ENCODE measurements at regions of chr12 and their contacts with region 1.

Region 1: GRCh38 chr12:92145731-92146496 is at the start of gene BTG1:
- DNase-seq: peak; percentile 99
- ATAC-seq: peak; percentile 78
- H3K4me3 Mint-ChIP-seq: peak within 1 kb of the TSS; percentile 99
- H3K27ac Mint-ChIP-seq: peak within 1 kb of the TSS; percentile 99
- H3K4me1 Mint-ChIP-seq: peaks cover 22% of the 10 kb centered on the region
- H3K27me3 Mint-ChIP-seq: no peaks in the 10 kb centered on the region
- total RNA-seq, gene BTG1: 76.6 to 131 TPM

Region 2: GRCh38 chr12:91382081-91382543 is 763.8 kb before region 1 on chr12:
- CTCF ChIA-PET with region 1: interaction called, 5 read pairs
- POLR2A ChIA-PET with region 1: interaction called, 3 read pairs
- intact Hi-C with region 1: loop called (anchors 1 to 5 kb)
- DNase-seq: peak; percentile 90
- ATAC-seq: peak; percentile 81
- H3K4me3 Mint-ChIP-seq: peak overlapping the region; percentile 70
- H3K27ac Mint-ChIP-seq: no peak overlapping the region
- H3K4me1 Mint-ChIP-seq: peaks cover 7% of the 10 kb centered on the region
- H3K27me3 Mint-ChIP-seq: peaks cover 3% of the 10 kb centered on the region

Region 3: GRCh38 chr12:91877022-91877421 is 268.9 kb before region 1 on chr12:
- CTCF ChIA-PET with region 1: interaction called, 5 read pairs
- POLR2A ChIA-PET with region 1: interaction called, 20 read pairs
- intact Hi-C with region 1: loop called in 1 of 2 experiments (anchors 2 kb)
- DNase-seq: peak; percentile 88
- ATAC-seq: peak; percentile 97
- H3K4me3 Mint-ChIP-seq: peak overlapping the region; percentile 55
- H3K27ac Mint-ChIP-seq: peak overlapping the region; percentile 97
- H3K4me1 Mint-ChIP-seq: peaks cover 71% of the 10 kb centered on the region
- H3K27me3 Mint-ChIP-seq: no peaks in the 10 kb centered on the region

Region 4: DNA sequence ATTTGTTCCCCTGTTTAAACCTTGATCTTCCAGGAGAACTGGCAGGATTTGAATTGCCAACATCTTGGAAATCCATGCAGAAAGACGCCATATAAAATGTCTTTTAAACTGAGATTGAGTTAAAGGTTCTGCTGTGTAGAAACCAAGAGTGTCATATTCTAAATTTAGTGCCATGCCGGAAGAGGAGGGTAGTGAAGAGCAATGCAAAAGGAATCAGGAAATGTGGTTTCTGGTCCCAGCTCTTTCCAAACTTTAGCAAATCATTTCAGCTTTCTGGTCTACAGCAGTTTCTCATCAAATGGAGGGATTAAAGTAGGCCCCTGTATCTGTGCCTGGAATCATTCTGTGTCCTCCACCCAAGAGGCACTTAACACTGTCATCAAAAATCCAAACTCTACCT is 85.9 kb before region 1 on chr12:
- CTCF ChIA-PET with region 1: interaction called, 4 read pairs
- POLR2A ChIA-PET with region 1: interaction called, 10 read pairs
- intact Hi-C with region 1: loop called (anchors 2 kb)
- DNase-seq: no peak
- ATAC-seq: no peak
- H3K4me3 Mint-ChIP-seq: peak overlapping the region; percentile 42
- H3K27ac Mint-ChIP-seq: peak overlapping the region; percentile 35
- H3K4me1 Mint-ChIP-seq: peaks cover 90% of the 10 kb centered on the region
- H3K27me3 Mint-ChIP-seq: no peaks in the 10 kb centered on the region

Region 5: GRCh38 chr12:92185052-92185451 is 39.1 kb after region 1 on chr12:
- CTCF ChIA-PET with region 1: no interaction called
- POLR2A ChIA-PET with region 1: no interaction called
- intact Hi-C with region 1: loop called in 1 of 2 experiments (anchors 5 kb)
- DNase-seq: peak; percentile 34
- ATAC-seq: peak; percentile 95
- H3K4me3 Mint-ChIP-seq: peak overlapping the region; percentile 11
- H3K27ac Mint-ChIP-seq: peak overlapping the region; percentile 64
- H3K4me1 Mint-ChIP-seq: peaks cover 48% of the 10 kb centered on the region
- H3K27me3 Mint-ChIP-seq: no peaks in the 10 kb centered on the region

Region 6: DNA sequence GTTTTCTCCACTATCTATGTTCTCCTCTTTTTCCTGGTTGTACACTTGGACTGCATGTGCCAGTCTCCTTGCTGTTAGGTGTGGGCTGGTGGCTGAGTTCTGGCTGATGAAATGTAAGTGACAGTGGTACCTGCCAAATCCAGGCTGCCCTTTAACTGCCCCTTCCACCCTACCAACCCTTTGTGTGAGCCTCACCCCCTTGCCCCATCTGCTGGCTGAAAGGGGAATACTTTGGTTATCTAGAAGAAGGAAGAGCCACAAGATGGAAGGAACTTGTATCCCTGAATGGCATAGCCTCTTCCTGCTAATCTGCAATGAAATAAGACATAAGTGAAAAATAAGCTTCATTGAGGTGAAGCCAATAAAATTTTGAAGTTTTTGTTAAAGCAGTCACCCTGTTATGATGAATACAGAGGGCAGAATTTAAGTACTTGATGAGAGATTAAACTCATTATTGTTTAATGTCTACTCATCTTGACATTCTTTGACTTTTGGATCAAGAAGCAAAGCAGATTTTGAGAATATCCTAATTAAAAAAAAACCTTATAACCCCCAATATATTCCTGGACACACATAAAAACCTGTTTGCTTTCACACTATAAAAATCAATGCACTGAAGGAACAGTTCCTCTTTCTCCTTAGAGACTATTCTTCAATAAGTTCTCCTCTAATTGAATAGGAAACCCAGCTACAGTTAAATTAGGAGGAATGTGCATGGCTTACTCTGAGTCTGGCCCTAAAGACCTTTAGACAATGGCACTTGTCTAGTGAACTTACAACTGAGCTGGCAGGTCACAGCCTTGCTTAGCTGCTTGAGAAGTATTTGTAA is 262.4 kb after region 1 on chr12:
- CTCF ChIA-PET with region 1: interaction called, 5 read pairs
- POLR2A ChIA-PET with region 1: interaction called, 12 read pairs
- intact Hi-C with region 1: loop called (anchors 1 to 2 kb)
- DNase-seq: peak; percentile 75
- ATAC-seq: peak; percentile 35
- H3K4me3 Mint-ChIP-seq: no peak overlapping the region
- H3K27ac Mint-ChIP-seq: peak overlapping the region; percentile 60
- H3K4me1 Mint-ChIP-seq: peaks cover 53% of the 10 kb centered on the region
- H3K27me3 Mint-ChIP-seq: no peaks in the 10 kb centered on the region

Region 7: GRCh38 chr12:92593734-92594402 is 448.0 kb after region 1 on chr12:
- CTCF ChIA-PET with region 1: no interaction called
- POLR2A ChIA-PET with region 1: interaction called, 4 read pairs
- intact Hi-C with region 1: loop called in 1 of 2 experiments (anchors 2 kb)
- DNase-seq: peak; percentile 83
- ATAC-seq: peak; percentile 95
- H3K4me3 Mint-ChIP-seq: peak overlapping the region; percentile 5
- H3K27ac Mint-ChIP-seq: peak overlapping the region; percentile 92
- H3K4me1 Mint-ChIP-seq: peaks cover 84% of the 10 kb centered on the region
- H3K27me3 Mint-ChIP-seq: no peaks in the 10 kb centered on the region

Measured in activated CD4-positive, alpha-beta T cell treated with anti-CD3 and anti-CD28 coated beads for 36 hours (primary cell).